Activated CD4-positive, alpha-beta T cell treated with anti-CD3 and anti-CD28 coated beads, Interleukin-2, amount 10 ng/mL, durations not matched to agents 24 days and 14 days (primary cell): ENCODE measurements at regions of chr2 and their contacts with region 1.

Region 1: GRCh38 chr2:162041485-162041884 is 32.5 kb downstream of the DPP4 start:
- DNase-seq: no peak
- H3K4me3 Mint-ChIP-seq: no peak overlapping the region
- H3K27ac Mint-ChIP-seq: no peak overlapping the region
- H3K4me1 Mint-ChIP-seq: peaks cover 27% of the 10 kb centered on the region
- H3K27me3 Mint-ChIP-seq: no peaks in the 10 kb centered on the region

Region 2: GRCh38 chr2:162025121-162026031 is 16.1 kb before region 1 on chr2:
- intact Hi-C with region 1: loop called (anchors 2 kb)
- DNase-seq: no peak
- H3K4me3 Mint-ChIP-seq: peak overlapping the region; percentile 1
- H3K27ac Mint-ChIP-seq: peak overlapping the region; percentile 14
- H3K4me1 Mint-ChIP-seq: peaks cover 54% of the 10 kb centered on the region
- H3K27me3 Mint-ChIP-seq: no peaks in the 10 kb centered on the region

Region 3: DNA sequence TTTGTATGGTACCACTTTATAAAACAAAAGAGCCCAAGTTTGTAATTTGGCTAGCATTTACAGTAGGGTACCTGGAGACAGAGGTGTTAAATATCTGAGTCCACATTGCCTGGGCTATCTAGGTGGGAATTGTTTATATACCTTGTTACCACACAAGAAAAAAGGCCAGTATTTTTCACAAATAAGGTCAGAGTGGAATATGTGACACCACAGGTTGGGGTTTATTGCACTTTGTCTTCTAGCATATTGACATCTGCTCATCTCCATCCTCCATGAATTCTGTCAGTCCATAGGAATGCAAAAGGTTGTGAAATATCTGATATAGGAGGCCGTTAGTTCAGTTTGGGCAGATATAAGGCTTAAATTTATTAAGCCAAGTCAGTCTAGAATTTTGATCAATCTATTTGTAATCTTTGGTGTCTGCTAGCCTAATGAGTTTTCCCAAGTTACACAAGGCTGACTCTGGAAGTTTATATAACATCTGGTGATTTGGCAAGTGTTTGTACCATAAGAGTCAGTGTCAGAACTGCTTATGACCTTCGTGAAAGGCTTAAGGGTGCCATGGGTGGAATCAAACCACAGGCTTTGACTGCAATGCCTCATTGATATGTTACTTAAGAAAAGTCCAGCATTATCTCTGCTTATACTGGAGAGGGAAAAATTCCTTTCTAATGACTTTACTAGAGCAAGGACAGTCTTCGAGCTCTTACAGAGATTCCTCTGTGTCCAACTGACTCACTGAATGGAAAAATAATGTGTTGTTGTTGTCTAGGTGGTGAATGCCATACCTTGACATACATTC is 43.8 kb after region 1 on chr2:
- intact Hi-C with region 1: no loop called
- DNase-seq: no peak
- H3K4me3 Mint-ChIP-seq: no peak overlapping the region
- H3K27ac Mint-ChIP-seq: no peak overlapping the region
- H3K4me1 Mint-ChIP-seq: peaks cover 8% of the 10 kb centered on the region
- H3K27me3 Mint-ChIP-seq: peaks cover 2% of the 10 kb centered on the region

Region 4: DNA sequence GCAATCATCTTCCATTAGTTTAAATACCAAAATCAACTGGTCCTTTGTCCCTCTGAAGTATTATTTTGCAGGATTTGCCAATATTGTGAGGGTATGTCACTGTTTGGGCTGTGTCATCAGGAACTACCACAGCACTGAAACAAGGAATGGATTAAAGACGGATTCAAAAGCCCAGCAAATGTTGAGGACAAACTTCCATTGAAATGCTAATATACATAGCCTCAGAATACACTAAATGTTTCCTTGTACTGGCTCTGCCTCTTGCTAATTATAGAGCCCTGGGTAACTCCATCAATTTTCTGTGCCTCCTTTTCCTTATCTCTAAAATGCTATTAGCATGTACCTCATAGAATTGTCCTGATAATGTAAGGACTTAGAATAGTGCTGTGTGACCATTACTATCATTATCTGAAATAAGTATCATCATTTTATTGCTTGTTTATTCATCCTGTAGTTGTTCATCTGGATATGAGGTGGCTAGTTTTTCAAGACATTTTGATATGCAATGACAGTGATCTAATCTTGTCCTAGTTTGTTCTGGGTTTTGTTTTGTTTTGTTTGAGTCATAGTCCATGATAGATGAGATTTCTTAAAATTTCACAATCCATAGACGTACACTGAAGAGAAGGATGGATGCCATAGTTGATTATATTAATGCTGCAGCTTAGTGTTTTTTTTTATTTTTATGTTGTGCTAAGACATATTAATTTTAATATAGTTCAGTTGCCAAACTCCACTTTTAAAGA is 1130.5 kb after region 1 on chr2:
- intact Hi-C with region 1: no loop called
- DNase-seq: no peak
- H3K4me3 Mint-ChIP-seq: no peak overlapping the region
- H3K27ac Mint-ChIP-seq: no peak overlapping the region
- H3K4me1 Mint-ChIP-seq: no peaks in the 10 kb centered on the region
- H3K27me3 Mint-ChIP-seq: no peaks in the 10 kb centered on the region